ENCODE measurements at regions of chr6 and their contacts with region 1.

Region 1: GRCh38 chr6:87154993-87155841 is at the start of gene ZNF292:
- DNase-seq: peak; percentile 99
- ATAC-seq: peak; percentile 86
- H3K4me3 Mint-ChIP-seq: peak within 1 kb of the TSS; percentile 100
- H3K27ac Mint-ChIP-seq: peak within 1 kb of the TSS; percentile 99
- H3K4me1 Mint-ChIP-seq: peaks cover 48% of the 10 kb centered on the region
- H3K27me3 Mint-ChIP-seq: no peaks in the 10 kb centered on the region
- total RNA-seq, gene ZNF292: 68.8 to 81.8 TPM

Region 2: DNA sequence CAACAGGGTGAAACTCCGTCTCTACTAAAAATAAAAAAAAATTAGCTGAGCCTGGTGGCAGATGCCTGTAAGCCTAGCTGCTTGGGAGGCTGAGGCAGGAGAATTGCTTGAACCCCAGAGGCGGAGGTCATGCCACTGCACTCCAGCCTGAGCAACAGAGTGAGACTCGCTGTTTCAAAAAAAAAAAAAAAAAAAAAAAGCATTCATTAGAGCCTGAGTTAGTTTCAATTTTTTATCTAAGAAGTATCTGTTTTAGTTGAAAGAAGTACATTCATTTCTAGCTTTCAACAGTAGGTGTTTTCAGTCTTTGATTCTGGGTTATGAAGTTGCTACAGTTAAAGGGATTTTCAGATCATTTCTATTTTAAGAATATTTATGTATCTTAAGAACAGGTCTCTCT is 42.3 kb after region 1 on chr6:
- CTCF ChIA-PET with region 1: no interaction called
- POLR2A ChIA-PET with region 1: no interaction called
- intact Hi-C with region 1: loop called (anchors 2 to 5 kb)
- DNase-seq: peak; percentile 28
- ATAC-seq: peak; percentile 64
- H3K4me3 Mint-ChIP-seq: no peak overlapping the region
- H3K27ac Mint-ChIP-seq: no peak overlapping the region
- H3K4me1 Mint-ChIP-seq: peaks cover 81% of the 10 kb centered on the region
- H3K27me3 Mint-ChIP-seq: no peaks in the 10 kb centered on the region

Region 3: DNA sequence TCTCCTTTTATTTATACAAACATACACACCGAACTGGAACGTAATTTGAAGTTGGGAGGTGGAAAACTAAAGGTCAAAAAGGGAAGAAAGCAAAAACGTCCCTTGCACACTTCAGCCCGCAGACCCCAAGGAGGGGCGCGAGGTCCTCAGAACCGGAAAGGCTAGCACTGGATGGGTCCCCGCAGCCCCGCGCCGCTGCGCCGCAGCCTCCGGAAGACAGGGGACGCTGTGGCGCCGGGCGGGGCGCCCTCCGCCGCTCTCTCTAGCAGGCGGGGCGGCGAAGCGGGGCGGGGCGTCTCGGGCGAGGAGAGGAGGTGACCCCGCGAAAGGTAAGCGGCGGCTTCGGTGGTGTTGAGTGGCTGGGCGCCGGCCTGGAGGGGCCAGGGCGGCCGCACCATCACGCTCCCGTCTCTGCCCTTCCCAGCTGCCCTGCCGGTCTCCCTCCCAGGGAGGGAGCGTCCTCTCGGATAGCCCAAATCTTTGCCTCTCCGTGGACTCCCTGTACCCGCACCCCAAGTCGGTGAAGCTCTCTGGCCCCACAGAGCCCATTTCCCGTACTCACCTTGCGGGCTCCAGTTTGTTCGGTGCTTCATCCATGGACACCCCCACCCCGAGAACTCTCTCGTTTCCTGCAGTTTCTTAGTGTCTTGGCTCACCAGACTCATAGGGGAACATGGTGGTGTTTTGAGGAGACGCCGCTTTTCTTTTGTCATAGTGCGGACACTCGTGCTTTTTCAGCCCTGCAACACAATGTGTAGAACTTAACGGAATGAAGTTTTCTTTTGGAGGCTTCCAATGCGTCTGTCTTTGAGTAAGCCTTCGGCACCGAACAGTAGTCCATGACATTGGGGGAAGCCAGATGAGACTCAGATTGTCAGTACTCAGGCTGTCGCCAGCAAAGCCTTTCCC is 167.3 kb after region 1 on chr6 and contains the start of gene SMIM8:
- CTCF ChIA-PET with region 1: no interaction called
- POLR2A ChIA-PET with region 1: no interaction called
- intact Hi-C with region 1: loop called (anchors 1 to 5 kb)
- DNase-seq: peak; percentile 94
- ATAC-seq: peak; percentile 100
- H3K4me3 Mint-ChIP-seq: peak within 1 kb of the TSS; percentile 92
- H3K27ac Mint-ChIP-seq: peak within 1 kb of the TSS; percentile 94
- H3K4me1 Mint-ChIP-seq: peaks cover 16% of the 10 kb centered on the region
- H3K27me3 Mint-ChIP-seq: no peaks in the 10 kb centered on the region
- total RNA-seq, gene SMIM8: 8.5 to 10.1 TPM

Region 4: DNA sequence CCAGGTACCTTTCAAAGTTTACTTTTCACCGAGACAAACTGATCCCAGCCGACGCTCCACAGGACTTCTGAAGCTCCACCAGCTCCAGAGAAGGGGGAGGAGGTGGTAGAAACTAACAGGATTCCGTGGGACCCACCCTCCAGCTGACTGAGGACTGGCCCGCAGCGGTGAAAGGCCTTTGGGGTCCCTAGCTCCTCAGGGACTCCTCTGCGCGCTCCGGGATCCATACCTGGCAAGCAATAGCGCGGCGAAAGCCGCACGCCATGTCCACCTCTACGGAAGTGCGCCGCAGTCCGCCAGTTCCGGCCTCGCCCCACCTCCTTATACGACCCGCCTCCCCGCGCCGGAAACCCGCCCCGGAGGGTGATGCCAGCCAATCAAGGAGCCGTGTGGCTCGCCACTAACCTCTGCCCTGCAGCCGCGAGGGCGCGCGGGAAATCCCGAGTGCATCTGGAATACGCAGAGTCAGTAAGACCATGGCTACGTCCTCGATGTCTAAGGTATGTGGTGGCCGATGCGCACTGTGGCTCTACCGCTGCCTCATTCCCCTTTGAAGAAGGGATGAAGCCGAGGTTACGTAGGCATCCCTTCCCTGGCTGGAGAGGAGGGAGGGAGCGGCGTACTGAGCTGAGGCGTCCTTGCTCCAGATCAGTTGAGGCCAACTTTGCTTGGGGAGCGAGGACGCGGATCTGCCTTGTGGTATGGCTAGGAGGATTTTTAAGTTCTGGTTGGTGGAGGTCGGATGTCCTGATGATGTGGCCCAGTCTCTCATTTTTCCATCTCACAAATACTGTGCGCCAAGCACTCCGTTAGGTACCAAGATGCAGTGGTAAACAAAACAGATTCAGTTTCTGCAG is 434.7 kb after region 1 on chr6 and contains the starts of genes ORC3 and RARS2:
- CTCF ChIA-PET with region 1: no interaction called
- POLR2A ChIA-PET with region 1: no interaction called
- intact Hi-C with region 1: loop called (anchors 1 to 2 kb)
- DNase-seq: peak; percentile 98
- ATAC-seq: peak; percentile 100
- H3K4me3 Mint-ChIP-seq: peak within 1 kb of the TSS; percentile 86
- H3K27ac Mint-ChIP-seq: peak within 1 kb of the TSS; percentile 94
- H3K4me1 Mint-ChIP-seq: peaks cover 51% of the 10 kb centered on the region
- H3K27me3 Mint-ChIP-seq: no peaks in the 10 kb centered on the region
- total RNA-seq, gene ORC3: 38.8 to 42.6 TPM
- total RNA-seq, gene RARS2: 20.8 to 24.7 TPM

Region 5: GRCh38 chr6:87808005-87808757 is 653.0 kb after region 1 on chr6:
- CTCF ChIA-PET with region 1: no interaction called
- POLR2A ChIA-PET with region 1: no interaction called
- intact Hi-C with region 1: loop called in 1 of 2 experiments (anchors 1 kb)
- DNase-seq: no peak
- ATAC-seq: peak; percentile 96
- H3K4me3 Mint-ChIP-seq: no peak overlapping the region
- H3K27ac Mint-ChIP-seq: peak overlapping the region; percentile 72
- H3K4me1 Mint-ChIP-seq: peaks cover 29% of the 10 kb centered on the region
- H3K27me3 Mint-ChIP-seq: peaks cover 15% of the 10 kb centered on the region